ENCODE measurements at regions of chr9 and their contacts with region 1.

Region 1: DNA sequence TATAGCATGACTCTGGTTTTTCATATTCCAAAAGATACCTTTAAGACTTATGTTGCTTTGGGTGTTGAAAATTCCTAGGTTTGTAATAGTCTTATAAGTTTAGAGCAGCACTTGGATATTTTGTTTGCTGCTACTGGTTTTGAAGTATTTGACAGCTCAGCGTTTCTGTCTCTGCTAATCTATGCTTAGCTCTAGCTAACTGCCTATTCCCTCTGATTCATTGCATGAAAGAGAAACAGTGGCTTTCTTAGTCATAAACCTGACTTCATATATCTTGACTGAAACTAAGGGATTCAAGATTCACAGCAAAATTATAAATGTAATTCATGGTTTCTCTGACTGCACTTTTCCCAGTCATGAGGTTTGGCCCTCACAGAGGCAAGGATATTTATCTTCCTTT is 35.6 kb upstream of the ANXA1 start:
- DNase-seq: peak; percentile 17
- CTCF ChIP-seq: no peak

Region 2: DNA sequence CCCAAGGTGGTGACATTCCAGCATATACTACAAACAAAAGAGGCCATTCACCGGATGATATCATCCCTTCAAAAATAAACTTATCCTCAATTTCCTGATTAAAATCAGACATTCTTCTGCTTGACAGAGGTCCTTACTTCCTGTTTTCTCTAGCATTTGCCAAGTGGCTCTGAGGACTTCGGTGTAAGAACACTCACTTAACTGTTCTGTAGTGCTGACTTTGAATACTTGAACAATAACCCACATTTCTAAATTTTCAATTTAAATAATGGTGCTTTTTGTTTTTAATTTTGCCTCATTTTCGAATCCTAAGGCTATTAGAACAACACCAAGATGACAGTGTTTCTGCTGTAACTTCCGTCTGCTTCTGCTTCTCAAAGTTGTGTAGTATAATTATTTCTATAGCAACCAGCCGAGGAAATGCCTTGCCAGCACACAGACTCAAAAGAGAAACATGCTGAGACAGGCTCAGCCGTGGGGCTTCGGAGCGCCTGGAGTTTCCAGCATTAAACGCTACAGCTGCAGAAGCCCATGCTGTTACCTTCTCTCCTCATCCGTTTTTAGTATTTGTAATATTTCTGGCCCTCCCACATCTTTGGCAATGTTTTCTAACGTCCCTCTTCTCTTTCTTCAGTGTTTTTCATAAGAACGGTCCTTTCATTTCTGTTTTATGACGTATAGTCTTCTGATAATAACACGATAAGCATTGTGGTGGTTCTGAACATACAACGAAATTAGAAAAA is 16.2 kb after region 1 on chr9:
- CTCF ChIA-PET with region 1: interaction called, 11 read pairs
- POLR2A ChIA-PET with region 1: no interaction called
- DNase-seq: peak; percentile 41
- CTCF ChIP-seq: no peak

Region 3: GRCh38 chr9:73183917-73184861 is 68.2 kb after region 1 on chr9:
- CTCF ChIA-PET with region 1: interaction called, 89 read pairs
- POLR2A ChIA-PET with region 1: no interaction called
- DNase-seq: peak; percentile 18
- CTCF ChIP-seq: peak; percentile 22

Measured in GM10248 (cell line).